WTC11 (cell line): ENCODE measurements at regions of chr20 and their contacts with region 1.

Region 1: GRCh38 chr20:62500237-62500864 is 24.6 kb upstream of the GATA5 start:
- DNase-seq: peak; percentile 88
- ATAC-seq: peak; percentile 64
- H3K4me3 Mint-ChIP-seq: no peak overlapping the region
- H3K27ac Mint-ChIP-seq: peak overlapping the region; percentile 0; the same call in 1 of the 2 replicates
- H3K4me1 Mint-ChIP-seq: peaks cover 3% of the 10 kb centered on the region
- H3K27me3 Mint-ChIP-seq: peaks cover 5% of the 10 kb centered on the region; the same call in 1 of the 2 replicates
- CTCF ChIP-seq: peak; percentile 82

Region 2: DNA sequence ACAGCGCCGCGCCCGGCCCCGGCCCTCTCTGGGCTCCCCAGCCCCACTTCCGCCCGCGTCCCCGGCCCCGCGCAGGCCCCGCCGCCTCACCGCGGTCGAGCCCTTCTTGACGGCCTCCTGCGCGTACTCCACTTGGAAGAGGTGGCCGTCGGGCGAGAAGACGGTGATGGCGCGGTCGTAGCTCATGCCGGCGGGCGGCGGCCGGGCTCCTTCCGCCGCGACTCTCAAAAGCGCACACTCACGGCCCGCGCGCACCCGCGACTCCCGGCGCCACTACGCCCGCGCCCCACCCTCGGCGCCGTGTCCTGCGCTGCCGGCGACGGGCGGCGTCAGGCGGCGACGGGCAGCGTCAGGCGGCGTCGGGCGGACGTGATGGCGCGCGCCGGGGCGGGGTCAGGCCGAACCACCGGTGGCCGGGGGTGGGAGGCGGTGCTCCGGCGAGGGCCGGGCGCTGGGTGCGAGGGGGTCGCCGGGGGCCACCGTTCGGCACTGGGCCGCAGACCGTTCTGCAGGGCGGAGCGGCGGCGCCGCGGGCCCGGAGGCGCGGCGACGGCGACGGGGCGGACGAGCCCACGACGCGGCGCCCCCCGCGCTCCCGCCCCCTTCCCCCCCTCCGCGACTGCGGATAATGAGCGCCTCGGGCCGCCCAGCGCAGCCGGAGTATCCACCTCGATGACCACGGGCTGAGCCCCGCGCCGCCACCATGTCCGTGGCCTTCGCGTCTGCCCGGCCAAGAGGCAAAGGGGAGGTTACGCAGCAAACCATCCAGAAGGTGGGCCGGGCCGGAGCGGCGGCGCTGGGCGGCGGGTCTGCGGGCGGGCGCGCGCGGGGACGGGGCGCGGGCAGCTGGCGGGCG is 357.0 kb before region 1 on chr20 and contains the starts of genes PSMA7 and SS18L1:
- CTCF ChIA-PET with region 1: no interaction called
- POLR2A ChIA-PET with region 1: no interaction called
- DNase-seq: peak; percentile 76
- ATAC-seq: peak; percentile 77
- H3K4me3 Mint-ChIP-seq: peak within 1 kb of the TSS; percentile 87
- H3K27ac Mint-ChIP-seq: peak within 1 kb of the TSS; percentile 94
- H3K4me1 Mint-ChIP-seq: peaks cover 30% of the 10 kb centered on the region
- H3K27me3 Mint-ChIP-seq: no peaks in the 10 kb centered on the region
- CTCF ChIP-seq: no peak
- total RNA-seq, gene PSMA7: 315 to 364 TPM (median 321 TPM) in 3 replicates
- total RNA-seq, gene SS18L1: 29.4 to 34.1 TPM (median 29.8 TPM) in 3 replicates

Region 3: DNA sequence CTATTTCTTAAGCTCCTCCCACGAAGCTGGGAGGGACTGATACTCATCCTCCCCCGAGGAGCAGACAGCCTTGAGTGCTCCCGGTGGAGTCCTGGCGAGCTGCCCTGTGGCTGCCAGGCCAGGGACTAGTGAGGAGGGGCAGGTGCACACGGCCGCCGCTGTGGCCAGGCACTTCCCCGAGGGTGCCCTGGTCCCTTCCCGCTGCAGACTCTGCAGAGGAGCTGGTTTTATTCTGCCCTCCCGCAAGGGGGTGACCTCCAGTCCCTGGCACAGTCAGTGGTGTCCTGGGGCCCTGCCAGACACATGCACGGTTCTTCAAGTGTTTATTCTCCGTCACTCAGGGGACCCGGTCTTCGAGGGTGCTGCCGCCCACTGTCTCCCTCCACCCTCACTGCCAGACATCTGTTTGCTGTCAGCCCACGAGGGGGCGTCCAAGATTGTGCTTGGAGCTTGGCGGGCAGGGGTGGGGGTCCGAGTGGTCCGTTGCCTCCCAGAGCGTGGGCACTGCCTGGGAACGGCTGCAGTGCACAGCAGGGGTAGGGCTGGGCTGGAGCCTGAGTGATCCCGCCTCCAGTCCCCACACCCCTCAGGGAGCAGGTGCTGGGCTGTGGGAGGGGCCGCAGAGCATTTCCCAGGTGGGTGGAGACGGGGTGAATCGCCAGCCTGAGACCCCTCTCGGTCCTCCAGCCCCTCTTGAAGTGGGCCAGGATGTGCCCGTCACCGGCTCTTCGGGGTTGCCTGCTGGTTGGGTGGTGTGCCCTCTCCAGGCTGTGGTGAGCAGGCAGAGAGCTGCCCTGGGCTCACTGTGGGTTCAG is 90.2 kb before region 1 on chr20:
- CTCF ChIA-PET with region 1: interaction called, 23 read pairs
- POLR2A ChIA-PET with region 1: no interaction called
- DNase-seq: peak; percentile 76
- ATAC-seq: peak; percentile 29
- H3K4me3 Mint-ChIP-seq: no peak overlapping the region
- H3K27ac Mint-ChIP-seq: no peak overlapping the region
- H3K4me1 Mint-ChIP-seq: peaks cover 9% of the 10 kb centered on the region
- H3K27me3 Mint-ChIP-seq: peaks cover 5% of the 10 kb centered on the region
- CTCF ChIP-seq: peak; percentile 54; the same call in 1 of the 2 replicates

Region 4: DNA sequence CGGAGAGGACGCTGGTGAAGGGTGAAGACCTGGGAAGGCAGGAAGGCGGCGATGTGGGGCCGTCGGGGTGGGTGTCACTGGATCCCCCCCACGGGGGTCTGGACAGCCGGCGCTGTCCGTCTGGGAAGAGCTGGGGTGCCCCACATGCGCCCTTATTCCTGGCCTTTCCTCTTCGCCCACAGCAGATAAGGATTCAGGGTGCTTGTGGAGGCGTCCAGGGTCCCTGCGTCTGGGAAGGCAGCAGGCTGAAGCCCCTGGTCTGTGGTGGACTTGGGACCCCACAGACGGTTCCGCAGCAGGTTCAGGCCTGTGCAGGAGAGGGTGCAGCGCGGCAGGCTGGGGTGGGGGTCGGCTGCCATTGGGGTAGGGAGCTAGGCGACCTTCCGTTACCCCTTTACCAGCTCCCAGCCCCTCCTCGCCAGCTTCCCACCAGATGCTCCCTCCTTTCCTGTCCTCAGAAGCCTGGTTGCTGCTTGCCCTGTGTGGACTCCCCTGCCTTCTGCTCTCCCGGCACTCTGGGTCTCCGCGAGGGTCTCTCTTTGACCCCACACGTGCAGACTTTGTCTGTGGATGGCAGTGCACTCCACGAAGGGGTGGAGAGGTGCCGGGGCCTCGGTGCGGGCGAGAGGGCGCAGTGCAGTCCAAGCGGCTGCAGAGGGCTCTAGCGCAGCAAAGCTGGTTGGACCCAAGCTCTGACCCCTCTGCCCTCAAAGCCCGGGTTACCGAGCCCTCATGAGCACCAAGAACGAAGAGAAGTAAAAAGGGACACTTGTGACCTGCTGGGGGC is 22.5 kb before region 1 on chr20:
- CTCF ChIA-PET with region 1: interaction called, 26 read pairs
- POLR2A ChIA-PET with region 1: no interaction called
- DNase-seq: peak; percentile 58
- ATAC-seq: peak; percentile 46
- H3K4me3 Mint-ChIP-seq: peak overlapping the region; percentile 55
- H3K27ac Mint-ChIP-seq: no peak overlapping the region
- H3K4me1 Mint-ChIP-seq: peaks cover 21% of the 10 kb centered on the region
- H3K27me3 Mint-ChIP-seq: peaks cover 91% of the 10 kb centered on the region
- CTCF ChIP-seq: no peak

Region 5: GRCh38 chr20:62523473-62524203 is 23.3 kb after region 1 on chr20:
- CTCF ChIA-PET with region 1: interaction called, 10 read pairs
- POLR2A ChIA-PET with region 1: no interaction called
- DNase-seq: peak; percentile 52
- ATAC-seq: peak; percentile 88
- H3K4me3 Mint-ChIP-seq: peak overlapping the region; percentile 12; the same call in 1 of the 2 replicates
- H3K27ac Mint-ChIP-seq: no peak overlapping the region
- H3K4me1 Mint-ChIP-seq: peaks cover 11% of the 10 kb centered on the region
- H3K27me3 Mint-ChIP-seq: no peaks in the 10 kb centered on the region
- CTCF ChIP-seq: no peak

Region 6: GRCh38 chr20:62583420-62583920 is 83.1 kb after region 1 on chr20:
- CTCF ChIA-PET with region 1: interaction called, 14 read pairs
- POLR2A ChIA-PET with region 1: no interaction called
- DNase-seq: no peak
- ATAC-seq: no peak; the same call in 1 of the 2 replicates
- H3K4me3 Mint-ChIP-seq: no peak overlapping the region
- H3K27ac Mint-ChIP-seq: no peak overlapping the region
- H3K4me1 Mint-ChIP-seq: peaks cover 2% of the 10 kb centered on the region; the same call in 1 of the 2 replicates
- H3K27me3 Mint-ChIP-seq: no peaks in the 10 kb centered on the region; the same call in 1 of the 2 replicates
- CTCF ChIP-seq: no peak